Stomach (tissue), 19 donors: ENCODE measurements at regions of chr19 and their contacts with region 1.

Region 1: DNA sequence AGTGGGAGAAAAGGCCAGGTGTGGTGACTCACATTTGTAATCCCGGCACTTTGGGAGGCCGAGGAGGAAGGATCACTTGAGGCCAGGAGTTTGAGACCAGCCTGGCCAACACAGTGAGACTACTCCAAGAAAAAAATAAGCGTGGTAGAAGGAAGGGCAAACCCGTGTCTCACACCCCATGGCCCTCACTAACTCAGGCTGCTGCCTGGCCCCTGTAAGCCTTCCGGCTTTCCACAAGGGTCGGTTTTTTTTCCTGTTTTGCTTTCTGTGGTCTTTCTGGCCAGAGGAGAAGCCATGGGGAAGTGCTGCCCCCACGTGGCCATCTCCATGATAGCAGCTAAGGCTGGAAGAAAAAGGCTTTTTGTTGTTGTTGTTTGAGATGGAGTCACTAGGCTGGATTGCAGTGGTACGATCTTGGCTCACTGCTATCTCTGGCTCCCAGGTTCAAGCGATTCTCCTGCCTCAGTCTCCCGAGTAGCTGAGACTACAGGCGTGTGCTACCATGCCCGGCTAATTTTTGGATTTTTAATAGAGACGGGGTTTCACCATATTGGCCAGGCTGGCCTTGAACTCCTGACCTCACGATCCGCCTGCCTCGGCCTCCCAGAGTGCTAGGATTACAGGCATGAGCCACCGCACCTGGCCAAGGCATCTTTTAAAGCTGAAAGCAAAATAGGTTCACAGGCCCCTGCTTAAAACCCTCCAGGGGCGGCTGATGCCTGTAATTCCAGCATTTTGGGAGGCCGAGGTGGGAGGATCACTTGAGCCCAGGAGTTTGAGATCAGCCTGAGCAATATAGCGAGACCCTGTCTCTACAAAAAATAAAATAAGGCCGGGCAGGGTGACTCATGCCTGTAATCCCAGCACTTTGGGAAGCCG is 7.5 kb upstream of the ARHGEF18 start:
- DNase-seq: peak; percentile 87 to 92
- H3K4me3 ChIP-seq: no peak overlapping the region
- H3K27ac ChIP-seq: no peak overlapping the region
- H3K4me1 ChIP-seq: peaks cover 4 to 36% (median 16%) of the 10 kb centered on the region in 4 donors
- H3K27me3 ChIP-seq: peaks cover 0 to 17% (median 0%) of the 10 kb centered on the region in 3 donors
- CTCF ChIP-seq: peak in 5 of 7 experiments; percentile 90 to 96 (median 92)
- EP300 ChIP-seq: no peak
- POLR2A ChIP-seq: no peak

Region 2: GRCh38 chr19:7101498-7102253 is 239.5 kb before region 1 on chr19:
- intact Hi-C with region 1: loop called (anchors 2 kb)
- DNase-seq: no peak
- H3K4me3 ChIP-seq: no peak overlapping the region
- H3K27ac ChIP-seq: no peak overlapping the region
- H3K4me1 ChIP-seq: peaks cover 18 to 34% (median 26%) of the 10 kb centered on the region in 4 donors
- H3K27me3 ChIP-seq: no peaks in the 10 kb centered on the region
- CTCF ChIP-seq: no peak
- EP300 ChIP-seq: no peak
- POLR2A ChIP-seq: no peak

Region 3: GRCh38 chr19:7145494-7146485 is 195.4 kb before region 1 on chr19:
- intact Hi-C with region 1: loop called (anchors 5 kb)
- DNase-seq: no peak
- H3K4me3 ChIP-seq: no peak overlapping the region
- H3K27ac ChIP-seq: peak overlapping the region in 3 of 5 donors; percentile 16 to 31 (median 27)
- H3K4me1 ChIP-seq: peaks cover 0 to 13% (median 5%) of the 10 kb centered on the region in 4 donors
- H3K27me3 ChIP-seq: no peaks in the 10 kb centered on the region
- CTCF ChIP-seq: no peak
- EP300 ChIP-seq: no peak
- POLR2A ChIP-seq: no peak